GM12878 (cell line): ENCODE measurements at regions of chr20 and their contacts with region 1.

Region 1: GRCh38 chr20:227439-228105 is 514 bp downstream of the DEFB129 start:
- DNase-seq: no peak
- ATAC-seq: no peak
- H3K4me3 ChIP-seq: no peak overlapping the region
- H3K27ac ChIP-seq: no peak overlapping the region
- H3K4me1 ChIP-seq: no peaks in the 10 kb centered on the region
- H3K27me3 ChIP-seq: no peaks in the 10 kb centered on the region
- CTCF ChIP-seq: no peak
- EP300 ChIP-seq: no peak
- POLR2A ChIP-seq: no peak
- RAD21 ChIP-seq: no peak

Region 2: DNA sequence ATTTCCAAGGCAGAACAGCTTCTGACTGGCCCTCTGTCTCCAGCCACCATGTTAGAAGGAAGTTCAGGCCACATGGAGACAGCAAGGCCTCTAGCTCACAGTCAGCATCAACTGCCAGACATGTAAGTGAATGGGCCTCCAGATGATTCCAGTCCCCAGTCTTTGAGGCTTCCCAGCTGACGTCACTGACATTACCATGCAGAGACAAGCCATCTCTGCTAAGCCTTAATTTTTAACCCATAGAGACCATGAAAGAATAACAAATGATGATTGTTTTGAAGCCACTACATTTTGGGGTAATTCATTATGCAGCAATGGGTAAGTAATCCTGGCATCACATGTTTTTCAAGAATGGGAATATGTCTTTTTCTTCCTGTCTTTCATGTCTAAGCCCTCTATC is 11.8 kb before region 1 on chr20:
- CTCF ChIA-PET with region 1: interaction called, 11 read pairs
- POLR2A ChIA-PET with region 1: no interaction called
- RAD21 ChIA-PET with region 1: no interaction called
- SMC1A ChIA-PET with region 1: interaction called, 3 read pairs
- in situ Hi-C with region 1: no loop called
- intact Hi-C with region 1: no loop called
- DNase-seq: no peak
- ATAC-seq: no peak
- H3K4me3 ChIP-seq: no peak overlapping the region
- H3K27ac ChIP-seq: no peak overlapping the region
- H3K4me1 ChIP-seq: no peaks in the 10 kb centered on the region
- H3K27me3 ChIP-seq: no peaks in the 10 kb centered on the region
- CTCF ChIP-seq: no peak
- EP300 ChIP-seq: no peak
- POLR2A ChIP-seq: no peak
- RAD21 ChIP-seq: no peak

Region 3: GRCh38 chr20:347640-348484 is 120.3 kb after region 1 on chr20:
- CTCF ChIA-PET with region 1: no interaction called
- POLR2A ChIA-PET with region 1: no interaction called
- RAD21 ChIA-PET with region 1: no interaction called
- SMC1A ChIA-PET with region 1: no interaction called
- in situ Hi-C with region 1: no loop called
- intact Hi-C with region 1: no loop called
- DNase-seq: peak; percentile 64
- ATAC-seq: peak; percentile 89
- H3K4me3 ChIP-seq: peak overlapping the region; percentile 83
- H3K27ac ChIP-seq: peak overlapping the region; percentile 73
- H3K4me1 ChIP-seq: 0 out of 2 replicates have a peak, but pooled peaks cover 3% of the 10 kb centered on the region
- H3K27me3 ChIP-seq: no peaks in the 10 kb centered on the region
- CTCF ChIP-seq: no peak
- EP300 ChIP-seq: no peak
- POLR2A ChIP-seq: no peak; the same call in 1 of the 2 replicates
- RAD21 ChIP-seq: no peak

Region 4: GRCh38 chr20:815914-816606 is 588.5 kb after region 1 on chr20:
- CTCF ChIA-PET with region 1: no interaction called
- POLR2A ChIA-PET with region 1: no interaction called
- RAD21 ChIA-PET with region 1: no interaction called
- SMC1A ChIA-PET with region 1: no interaction called
- in situ Hi-C with region 1: no loop called
- intact Hi-C with region 1: no loop called
- DNase-seq: no peak
- ATAC-seq: peak; percentile 75
- H3K4me3 ChIP-seq: no peak overlapping the region
- H3K27ac ChIP-seq: no peak overlapping the region
- H3K4me1 ChIP-seq: no peaks in the 10 kb centered on the region
- H3K27me3 ChIP-seq: no peaks in the 10 kb centered on the region
- CTCF ChIP-seq: peak; percentile 98
- EP300 ChIP-seq: no peak
- POLR2A ChIP-seq: no peak
- RAD21 ChIP-seq: peak; percentile 95